SK-N-SH (cell line): ENCODE measurements at regions of chr9 and their contacts with region 1.

Region 1: DNA sequence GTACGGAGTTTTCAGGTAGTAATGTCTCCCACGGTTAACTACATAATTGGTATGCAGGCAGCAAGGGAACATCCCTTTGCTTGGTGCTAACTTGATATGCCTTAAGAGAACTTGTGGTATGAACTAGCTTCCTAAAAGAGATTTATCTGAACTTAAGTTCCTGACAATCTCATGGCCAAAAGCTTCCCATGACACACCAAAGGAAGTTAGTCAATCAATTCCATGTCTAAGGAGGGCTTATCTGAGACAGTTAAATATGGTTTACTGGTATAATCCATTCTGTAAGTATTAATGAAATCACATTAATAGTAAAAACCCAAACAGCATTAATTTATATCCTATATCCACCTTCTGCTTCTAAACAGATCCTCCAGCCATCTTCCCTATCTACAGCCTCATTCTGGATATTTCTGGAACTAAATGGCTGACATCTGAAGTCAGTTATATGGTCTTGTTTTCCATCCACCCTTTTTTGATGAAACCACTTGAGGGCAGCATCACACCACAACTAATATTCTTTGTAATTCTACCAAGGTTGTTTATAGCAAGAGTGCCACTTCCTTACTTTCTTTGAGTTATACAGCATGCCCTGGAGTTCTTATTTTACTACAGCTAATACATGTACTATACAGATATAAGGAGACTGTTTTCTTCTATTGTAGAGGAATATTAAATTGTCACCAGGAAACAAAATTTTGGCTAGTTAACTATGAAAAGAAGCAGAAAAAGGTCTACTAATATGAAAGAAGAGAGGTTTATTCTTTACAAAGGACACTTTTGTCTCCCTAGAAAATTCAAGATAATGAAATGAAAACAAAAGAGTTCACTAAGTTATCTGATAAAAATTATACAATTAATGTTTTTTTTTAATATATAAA is 34.7 kb downstream of the SHOC1 start:
- DNase-seq: peak; percentile 53
- H3K4me3 ChIP-seq: no peak overlapping the region; a peak in 1 of 4 replicates
- H3K27ac ChIP-seq: peak overlapping the region; percentile 32 to 47; a peak in 2 of 4 replicates
- H3K4me1 ChIP-seq: 0 out of 4 replicates have a peak, but pooled peaks cover 0 to 4% of the 10 kb centered on the region in 2 experiments
- H3K27me3 ChIP-seq: no peaks in the 10 kb centered on the region
- CTCF ChIP-seq: peak; percentile 76
- EP300 ChIP-seq: peak in 1 of 2 experiments; percentile 32; a peak in 1 of 4 replicates
- RAD21 ChIP-seq: peak; percentile 95

Region 2: DNA sequence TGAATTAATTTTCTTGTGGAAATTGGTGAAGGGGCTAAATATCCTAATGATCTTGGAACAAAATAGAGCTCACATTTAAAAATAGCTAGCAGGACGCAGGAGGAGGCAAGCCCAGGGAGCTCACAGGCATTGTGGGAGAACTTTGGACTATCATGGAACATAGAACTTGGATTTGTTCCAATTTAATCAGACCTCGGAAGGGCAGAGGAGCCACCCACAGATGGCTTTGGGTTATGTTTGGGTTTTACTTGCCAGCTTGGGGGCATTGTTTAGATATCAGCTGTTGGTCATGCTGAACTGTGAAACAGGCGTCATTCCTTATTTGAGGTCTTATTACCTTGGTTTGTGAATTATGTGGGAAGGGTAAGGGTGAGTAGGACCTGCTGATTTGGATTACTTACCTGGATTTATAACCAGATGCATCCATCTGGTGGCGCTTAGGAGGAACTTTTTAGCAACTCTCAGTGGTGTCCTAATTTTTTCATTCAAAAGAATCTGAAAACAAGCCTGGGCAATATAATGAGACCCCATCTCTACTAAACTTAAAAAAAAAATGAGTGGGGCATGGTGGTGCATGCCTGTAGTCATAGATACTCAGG is 146.5 kb before region 1 on chr9:
- CTCF ChIA-PET with region 1: no interaction called
- POLR2A ChIA-PET with region 1: no interaction called
- DNase-seq: no peak
- H3K4me3 ChIP-seq: no peak overlapping the region
- H3K27ac ChIP-seq: no peak overlapping the region
- H3K4me1 ChIP-seq: no peaks in the 10 kb centered on the region
- H3K27me3 ChIP-seq: no peaks in the 10 kb centered on the region
- CTCF ChIP-seq: no peak
- EP300 ChIP-seq: no peak
- RAD21 ChIP-seq: no peak

Region 3: GRCh38 chr9:112086627-112087026 is 326.6 kb after region 1 on chr9:
- CTCF ChIA-PET with region 1: interaction called, 24 read pairs
- POLR2A ChIA-PET with region 1: no interaction called
- DNase-seq: peak; percentile 42
- H3K4me3 ChIP-seq: no peak overlapping the region; a peak in 1 of 4 replicates
- H3K27ac ChIP-seq: no peak overlapping the region
- H3K4me1 ChIP-seq: no peaks in the 10 kb centered on the region
- H3K27me3 ChIP-seq: no peaks in the 10 kb centered on the region
- CTCF ChIP-seq: peak; percentile 63
- EP300 ChIP-seq: no peak
- RAD21 ChIP-seq: peak; percentile 75